Adrenal gland (tissue), 19 donors: ENCODE measurements at regions of chrX and their contacts with region 1.

Region 1: GRCh38 chrX:129606918-129607317 is 47.8 kb downstream of the APLN start:
- DNase-seq: peak; percentile 51 to 80 (median 62)
- H3K4me3 ChIP-seq: no peak overlapping the region
- H3K27ac ChIP-seq: no peak overlapping the region
- H3K4me1 ChIP-seq: peaks cover 0 to 4% of the 10 kb centered on the region in 2 donors
- H3K27me3 ChIP-seq: no peaks in the 10 kb centered on the region
- CTCF ChIP-seq: peak; percentile 66 to 88 (median 80)
- POLR2A ChIP-seq: no peak

Region 2: DNA sequence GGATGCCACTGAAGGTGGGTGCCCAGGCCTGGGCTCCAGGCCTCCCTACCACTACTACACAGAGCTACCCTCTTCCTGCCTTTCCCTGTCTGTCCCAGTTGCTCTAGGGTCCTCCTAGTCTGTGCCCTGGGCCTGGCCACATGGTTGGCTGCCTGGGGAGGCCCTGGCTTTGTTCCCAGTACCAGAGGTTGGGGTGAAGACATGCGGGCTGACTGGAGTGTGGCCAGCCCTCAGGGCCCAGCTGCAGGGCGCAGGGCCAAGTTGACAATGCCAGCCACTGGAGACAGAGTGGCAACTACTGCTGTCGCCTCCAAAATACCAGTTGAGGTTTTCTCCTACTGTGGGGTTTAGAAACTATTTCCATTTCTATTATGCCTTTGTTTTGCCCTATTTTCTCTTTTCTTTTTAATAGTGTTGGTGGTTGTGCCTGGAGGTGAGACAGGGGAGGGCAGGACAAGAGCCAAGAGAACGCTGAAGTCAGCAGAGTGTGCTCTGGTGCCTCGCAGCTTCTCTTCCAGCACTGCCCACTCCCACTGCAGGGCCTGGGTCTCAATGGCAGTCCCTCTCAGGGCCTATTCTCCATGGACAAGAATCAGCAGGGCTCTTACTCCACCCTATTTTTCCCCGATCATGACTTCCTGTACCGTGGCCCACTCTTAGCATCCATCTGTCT is 99.6 kb after region 1 on chrX:
- intact Hi-C with region 1: no loop called
- DNase-seq: peak; percentile 50 to 76 (median 64)
- H3K4me3 ChIP-seq: no peak overlapping the region
- H3K27ac ChIP-seq: no peak overlapping the region
- H3K4me1 ChIP-seq: no peaks in the 10 kb centered on the region
- H3K27me3 ChIP-seq: no peaks in the 10 kb centered on the region
- CTCF ChIP-seq: no peak
- POLR2A ChIP-seq: no peak

Region 3: DNA sequence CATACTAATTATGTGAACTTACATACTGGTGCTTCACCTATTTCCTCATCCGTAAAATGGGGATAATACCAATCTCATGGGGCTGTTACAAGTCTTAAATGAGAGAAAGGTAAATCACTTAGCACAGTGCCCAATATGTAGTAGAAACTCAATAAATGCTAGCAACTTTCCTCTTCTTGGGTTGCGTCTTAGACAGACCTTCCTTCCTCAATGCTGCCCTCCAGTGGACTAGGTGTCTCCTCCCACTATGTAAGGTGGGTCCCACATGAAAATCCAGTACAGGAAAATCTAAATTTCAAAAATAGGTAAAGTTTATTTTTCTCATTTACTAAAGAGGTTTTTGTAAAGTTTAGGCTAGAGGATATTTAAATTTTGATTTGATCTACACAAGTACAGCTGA is 216.2 kb after region 1 on chrX:
- intact Hi-C with region 1: loop called in 1 of 2 experiments (anchors 10 kb)
- DNase-seq: peak; percentile 33 to 58 (median 46)
- H3K4me3 ChIP-seq: no peak overlapping the region
- H3K27ac ChIP-seq: no peak overlapping the region
- H3K4me1 ChIP-seq: no peaks in the 10 kb centered on the region
- H3K27me3 ChIP-seq: no peaks in the 10 kb centered on the region
- CTCF ChIP-seq: peak; percentile 28 to 56 (median 46)
- POLR2A ChIP-seq: no peak

Region 4: DNA sequence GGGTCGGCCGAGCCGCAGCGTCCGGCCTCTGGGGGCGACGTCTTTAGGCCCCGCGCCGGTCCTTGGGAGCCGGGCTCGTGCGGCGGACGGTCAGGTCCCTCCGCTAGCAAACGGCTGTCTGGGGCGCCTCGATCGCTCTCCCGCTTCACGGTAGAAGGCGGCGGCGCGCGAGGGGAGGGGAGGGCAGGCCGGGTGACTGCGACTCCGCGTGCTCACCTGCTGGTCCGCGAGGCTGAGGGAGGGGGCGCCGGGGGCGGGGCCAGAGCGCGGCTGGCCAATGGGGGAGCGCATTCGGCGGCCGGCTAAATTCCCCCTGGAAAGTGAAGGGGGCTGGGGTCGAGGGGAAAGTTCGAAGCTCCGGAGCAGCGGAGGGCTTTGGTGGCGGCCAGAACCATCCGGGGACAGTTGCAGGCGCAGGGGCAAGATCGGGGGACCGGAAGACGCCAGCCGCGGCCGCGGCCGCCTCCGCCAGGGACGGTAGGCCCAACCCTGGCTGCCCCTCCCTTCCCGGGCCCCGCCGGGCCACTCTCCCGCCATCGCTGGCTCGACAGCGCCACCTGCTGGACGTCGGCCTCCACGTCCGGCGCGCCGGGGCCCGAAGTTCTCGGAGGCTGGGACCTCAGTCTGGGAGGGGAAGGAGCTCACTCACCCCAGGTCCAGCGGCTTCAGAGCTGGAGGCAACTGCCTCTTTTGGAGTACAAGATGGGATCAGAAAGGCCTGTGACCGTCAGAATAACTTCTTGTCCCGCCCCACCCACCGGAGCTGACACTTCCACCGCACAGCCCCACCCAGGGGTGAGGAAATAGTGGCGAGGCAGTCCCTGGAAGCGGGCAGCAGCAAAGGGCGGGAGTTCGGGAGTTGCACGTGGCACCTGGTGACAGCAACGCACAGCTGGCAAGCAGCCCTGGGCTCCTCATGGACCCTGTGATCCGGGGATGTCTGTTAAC is 453.5 kb after region 1 on chrX:
- intact Hi-C with region 1: loop called in 1 of 2 experiments (anchors 10 kb)
- DNase-seq: peak; percentile 64 to 84 (median 74)
- H3K4me3 ChIP-seq: peak overlapping the region in 2 of 4 donors; percentile 5 to 62
- H3K27ac ChIP-seq: peak overlapping the region in 2 of 5 donors; percentile 44 to 66
- H3K4me1 ChIP-seq: peaks cover 0 to 4% of the 10 kb centered on the region in 2 donors
- H3K27me3 ChIP-seq: no peaks in the 10 kb centered on the region
- CTCF ChIP-seq: peak; percentile 67 to 91 (median 77)
- POLR2A ChIP-seq: no peak